ENCODE measurements at regions of chr17 and their contacts with region 1.

Region 1: GRCh38 chr17:49763735-49764558 is at the start of gene FAM117A:
- DNase-seq: peak; percentile 99
- ATAC-seq: peak; percentile 98
- H3K4me3 ChIP-seq: peak within 1 kb of the TSS; percentile 86
- H3K27ac ChIP-seq: no peak within 1 kb of the TSS
- H3K4me1 ChIP-seq: peaks cover 18% of the 10 kb centered on the region
- H3K27me3 ChIP-seq: 0 out of 4 replicates have a peak, but pooled peaks cover 0 to 1% of the 10 kb centered on the region in 2 experiments
- CTCF ChIP-seq: no peak
- EP300 ChIP-seq: no peak
- POLR2A ChIP-seq: peak; percentile 97
- RAD21 ChIP-seq: no peak
- polyA plus RNA-seq, gene FAM117A: 2.1 to 3.3 TPM

Region 2: GRCh38 chr17:49739641-49740271 is 24.2 kb before region 1 on chr17:
- CTCF ChIA-PET with region 1: interaction called, 4 read pairs
- POLR2A ChIA-PET with region 1: interaction called, 32 read pairs
- RAD21 ChIA-PET with region 1: interaction called, 37 read pairs
- SMC1A ChIA-PET with region 1: interaction called, 86 read pairs
- in situ Hi-C with region 1: no loop called
- intact Hi-C with region 1: no loop called
- DNase-seq: no peak
- ATAC-seq: peak; percentile 77
- H3K4me3 ChIP-seq: peak overlapping the region; percentile 31; the same call in 1 of the 2 replicates
- H3K27ac ChIP-seq: peak overlapping the region; percentile 79
- H3K4me1 ChIP-seq: peaks cover 44% of the 10 kb centered on the region
- H3K27me3 ChIP-seq: no peaks in the 10 kb centered on the region
- CTCF ChIP-seq: no peak
- EP300 ChIP-seq: 0 out of 4 replicates have a peak, but pooled peaks of 1 of the 2 experiments have one; percentile 13
- POLR2A ChIP-seq: peak; percentile 45; the same call in 1 of the 2 replicates
- RAD21 ChIP-seq: no peak

Region 3: GRCh38 chr17:49748791-49749190 is 15.2 kb before region 1 on chr17:
- CTCF ChIA-PET with region 1: interaction called, 36 read pairs
- POLR2A ChIA-PET with region 1: interaction called, 116 read pairs
- RAD21 ChIA-PET with region 1: interaction called, 37 read pairs
- SMC1A ChIA-PET with region 1: interaction called, 128 read pairs
- in situ Hi-C with region 1: no loop called
- intact Hi-C with region 1: no loop called
- DNase-seq: peak; percentile 97
- ATAC-seq: peak; percentile 91
- H3K4me3 ChIP-seq: no peak overlapping the region
- H3K27ac ChIP-seq: peak overlapping the region; percentile 92
- H3K4me1 ChIP-seq: peaks cover 57% of the 10 kb centered on the region
- H3K27me3 ChIP-seq: no peaks in the 10 kb centered on the region
- CTCF ChIP-seq: no peak
- EP300 ChIP-seq: peak; percentile 92 to 97
- POLR2A ChIP-seq: peak; percentile 52; the same call in 1 of the 2 replicates
- RAD21 ChIP-seq: no peak

Region 4: DNA sequence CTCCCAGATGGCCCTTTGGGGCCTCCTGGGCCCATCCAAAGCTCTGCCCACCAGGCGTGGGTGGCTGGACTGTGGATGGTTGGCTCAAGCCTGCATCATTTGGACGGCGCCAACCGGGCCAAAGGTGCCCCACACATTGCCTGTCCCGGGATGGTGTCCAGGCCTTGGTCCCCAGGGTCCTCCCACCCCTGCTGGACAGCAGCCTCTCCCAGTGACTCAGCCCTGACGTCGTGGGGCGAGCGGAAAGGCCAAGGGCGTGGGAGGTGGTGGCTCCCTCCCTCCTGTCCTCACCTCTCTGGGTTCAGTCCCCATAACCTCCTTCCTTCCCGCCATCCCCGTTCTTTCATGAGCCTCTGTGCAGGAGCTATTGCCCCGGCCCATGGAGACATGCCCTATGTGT is 162.9 kb after region 1 on chr17:
- CTCF ChIA-PET with region 1: no interaction called
- POLR2A ChIA-PET with region 1: no interaction called
- RAD21 ChIA-PET with region 1: no interaction called
- SMC1A ChIA-PET with region 1: no interaction called
- in situ Hi-C with region 1: no loop called
- intact Hi-C with region 1: no loop called
- DNase-seq: no peak
- ATAC-seq: no peak
- H3K4me3 ChIP-seq: no peak overlapping the region
- H3K27ac ChIP-seq: no peak overlapping the region
- H3K4me1 ChIP-seq: no peaks in the 10 kb centered on the region
- H3K27me3 ChIP-seq: peaks cover 0 to 6% of the 10 kb centered on the region in 2 experiments; a peak in 2 of 4 replicates
- CTCF ChIP-seq: no peak
- EP300 ChIP-seq: no peak
- POLR2A ChIP-seq: no peak
- RAD21 ChIP-seq: no peak